CD8-positive, alpha-beta memory T cell (primary cell): ENCODE measurements at regions of chr22 and their contacts with region 1.

Region 1: GRCh38 chr22:29457730-29458129 is 19.3 kb downstream of the RFPL1 start:
- DNase-seq: no peak
- H3K4me3 ChIP-seq: no peak overlapping the region
- H3K4me3 Mint-ChIP-seq: no peak overlapping the region
- H3K27ac ChIP-seq: no peak overlapping the region
- H3K27ac Mint-ChIP-seq: no peak overlapping the region
- H3K4me1 ChIP-seq: no peaks in the 10 kb centered on the region
- H3K4me1 Mint-ChIP-seq: no peaks in the 10 kb centered on the region
- H3K27me3 ChIP-seq: no peaks in the 10 kb centered on the region
- H3K27me3 Mint-ChIP-seq: peaks cover 0 to 2% of the 10 kb centered on the region in 2 donors

Region 2: DNA sequence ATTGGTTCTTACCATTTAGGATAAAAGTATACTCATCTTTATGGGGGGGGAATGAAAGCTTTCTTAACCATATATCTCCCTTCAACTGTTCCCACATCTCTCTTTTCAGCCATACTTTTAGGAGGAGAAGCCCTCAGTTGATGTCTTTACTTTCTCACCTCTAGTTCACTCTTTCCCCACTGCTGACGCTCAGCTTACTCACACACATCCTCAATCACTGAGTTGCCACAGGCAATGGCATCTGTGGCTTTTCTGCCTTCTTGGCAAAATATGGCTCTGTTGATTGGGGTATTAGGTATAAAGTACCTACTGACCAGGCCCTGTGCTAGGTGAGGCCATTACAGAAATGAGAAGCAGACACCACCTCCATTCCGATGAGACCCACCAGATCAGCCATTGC is 57.2 kb before region 1 on chr22:
- CTCF ChIA-PET with region 1: no interaction called
- POLR2A ChIA-PET with region 1: no interaction called
- DNase-seq: no peak
- H3K4me3 ChIP-seq: no peak overlapping the region
- H3K4me3 Mint-ChIP-seq: no peak overlapping the region
- H3K27ac ChIP-seq: no peak overlapping the region
- H3K27ac Mint-ChIP-seq: no peak overlapping the region
- H3K4me1 ChIP-seq: no peaks in the 10 kb centered on the region
- H3K4me1 Mint-ChIP-seq: no peaks in the 10 kb centered on the region
- H3K27me3 ChIP-seq: no peaks in the 10 kb centered on the region
- H3K27me3 Mint-ChIP-seq: peaks cover 4 to 22% of the 10 kb centered on the region in 2 donors

Region 3: DNA sequence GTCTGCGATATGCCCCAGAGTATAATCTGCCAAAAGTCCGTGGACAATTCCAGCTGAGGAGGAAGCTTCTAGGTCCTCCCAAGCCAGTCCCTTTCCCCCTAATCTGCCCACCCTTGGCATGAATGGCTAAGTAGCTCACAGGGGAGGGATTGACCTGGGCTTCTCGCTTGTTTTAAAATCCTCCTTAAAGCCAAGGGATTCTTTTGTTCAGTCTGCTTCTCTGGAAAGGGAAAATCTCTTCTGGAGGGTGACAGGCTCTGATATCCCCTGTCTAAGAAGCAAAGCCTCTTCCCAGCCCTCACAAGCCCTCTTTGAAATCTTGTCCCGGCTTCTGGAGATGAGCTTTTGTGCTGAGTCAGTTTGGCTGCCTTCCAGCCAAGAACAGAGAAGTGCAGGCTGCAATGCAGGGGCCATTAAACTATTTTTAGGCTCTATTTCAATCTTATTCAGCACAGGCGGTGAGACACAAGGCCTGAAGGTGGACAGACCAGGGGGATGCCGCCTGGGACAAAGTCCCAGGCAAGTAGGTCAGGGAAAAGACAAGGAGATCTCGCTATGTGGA is 46.2 kb after region 1 on chr22:
- CTCF ChIA-PET with region 1: no interaction called
- POLR2A ChIA-PET with region 1: no interaction called
- DNase-seq: no peak
- H3K4me3 ChIP-seq: no peak overlapping the region
- H3K4me3 Mint-ChIP-seq: no peak overlapping the region
- H3K27ac ChIP-seq: no peak overlapping the region
- H3K27ac Mint-ChIP-seq: peak overlapping the region in 2 of 8 donors; percentile 20 to 26
- H3K4me1 ChIP-seq: no peaks in the 10 kb centered on the region
- H3K4me1 Mint-ChIP-seq: no peaks in the 10 kb centered on the region
- H3K27me3 ChIP-seq: no peaks in the 10 kb centered on the region
- H3K27me3 Mint-ChIP-seq: no peaks in the 10 kb centered on the region

Region 4: GRCh38 chr22:29581807-29582206 is 124.1 kb after region 1 on chr22:
- CTCF ChIA-PET with region 1: no interaction called
- POLR2A ChIA-PET with region 1: interaction called, 12 read pairs
- DNase-seq: no peak
- H3K4me3 ChIP-seq: peak overlapping the region; percentile 79
- H3K4me3 Mint-ChIP-seq: peak overlapping the region; percentile 58 to 99 (median 94)
- H3K27ac ChIP-seq: no peak overlapping the region
- H3K27ac Mint-ChIP-seq: peak overlapping the region in 6 of 8 donors; percentile 47 to 94 (median 91)
- H3K4me1 ChIP-seq: peaks cover 5% of the 10 kb centered on the region
- H3K4me1 Mint-ChIP-seq: peaks cover 13 to 23% (median 14%) of the 10 kb centered on the region in 3 donors
- H3K27me3 ChIP-seq: no peaks in the 10 kb centered on the region
- H3K27me3 Mint-ChIP-seq: no peaks in the 10 kb centered on the region

Region 5: GRCh38 chr22:29780748-29781676 is 323.3 kb after region 1 on chr22:
- CTCF ChIA-PET with region 1: no interaction called
- POLR2A ChIA-PET with region 1: no interaction called
- DNase-seq: no peak
- H3K4me3 ChIP-seq: no peak overlapping the region
- H3K4me3 Mint-ChIP-seq: no peak overlapping the region
- H3K27ac ChIP-seq: no peak overlapping the region
- H3K27ac Mint-ChIP-seq: peak overlapping the region in 1 of 8 donors; percentile 4
- H3K4me1 ChIP-seq: no peaks in the 10 kb centered on the region
- H3K4me1 Mint-ChIP-seq: no peaks in the 10 kb centered on the region
- H3K27me3 ChIP-seq: no peaks in the 10 kb centered on the region
- H3K27me3 Mint-ChIP-seq: no peaks in the 10 kb centered on the region